CD4-positive, alpha-beta memory T cell (primary cell): ENCODE measurements at regions of chr11 and their contacts with region 1.

Region 1: DNA sequence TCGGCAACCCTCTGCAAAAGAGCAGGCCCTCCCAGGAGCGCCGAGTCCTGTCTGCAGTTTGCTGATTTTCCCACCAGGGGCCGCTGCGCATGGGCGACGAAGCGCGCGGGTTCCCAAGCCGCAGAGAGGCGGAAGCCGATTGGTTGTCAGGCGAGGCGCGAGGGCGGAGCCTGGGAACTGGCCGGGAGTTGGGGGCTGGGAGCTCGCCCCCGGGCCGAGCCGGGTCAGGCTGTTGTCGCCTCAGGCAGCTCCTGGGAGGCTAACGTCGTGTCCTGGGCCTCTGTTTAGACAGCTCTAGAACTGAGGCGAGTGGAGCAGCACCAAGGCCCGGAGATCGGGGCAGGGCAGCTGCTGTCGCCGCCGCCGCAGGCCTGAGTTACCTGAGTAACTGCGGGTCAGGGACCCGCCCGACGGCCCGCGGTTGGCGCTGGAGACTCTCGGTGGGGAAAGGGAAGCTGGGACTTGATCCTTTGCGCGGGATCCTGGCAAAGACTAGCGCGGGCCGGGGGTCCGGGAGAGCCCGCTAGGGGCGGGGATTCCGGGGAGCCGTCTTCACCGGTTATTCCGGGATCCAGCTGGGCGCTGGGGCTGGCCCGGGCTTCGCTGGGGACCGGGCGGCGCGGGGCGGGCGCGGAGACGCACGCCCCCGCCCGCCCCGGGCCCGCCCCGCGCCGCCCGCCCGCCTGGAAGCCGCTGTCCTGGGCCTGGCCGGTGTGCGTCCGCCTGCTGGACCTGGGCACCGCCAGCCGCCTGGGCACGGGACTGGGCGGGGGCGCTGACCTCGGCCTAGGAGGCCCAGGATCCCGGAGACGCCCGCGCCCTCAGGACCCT is at the start of gene STIM1:
- DNase-seq: peak; percentile 96 to 98 (median 97)
- H3K4me3 ChIP-seq: peak within 1 kb of the TSS; percentile 91 to 92
- H3K4me3 Mint-ChIP-seq: peak within 1 kb of the TSS; percentile 90 to 97 (median 94)
- H3K27ac ChIP-seq: peak within 1 kb of the TSS; percentile 94
- H3K27ac Mint-ChIP-seq: peak within 1 kb of the TSS; percentile 99 to 100 (median 99)
- H3K4me1 ChIP-seq: peaks cover 64% of the 10 kb centered on the region
- H3K4me1 Mint-ChIP-seq: peaks cover 49 to 71% (median 61%) of the 10 kb centered on the region in 4 donors
- H3K27me3 ChIP-seq: no peaks in the 10 kb centered on the region
- H3K27me3 Mint-ChIP-seq: no peaks in the 10 kb centered on the region
- total RNA-seq, gene STIM1: 87.1 to 87.4 TPM

Region 2: DNA sequence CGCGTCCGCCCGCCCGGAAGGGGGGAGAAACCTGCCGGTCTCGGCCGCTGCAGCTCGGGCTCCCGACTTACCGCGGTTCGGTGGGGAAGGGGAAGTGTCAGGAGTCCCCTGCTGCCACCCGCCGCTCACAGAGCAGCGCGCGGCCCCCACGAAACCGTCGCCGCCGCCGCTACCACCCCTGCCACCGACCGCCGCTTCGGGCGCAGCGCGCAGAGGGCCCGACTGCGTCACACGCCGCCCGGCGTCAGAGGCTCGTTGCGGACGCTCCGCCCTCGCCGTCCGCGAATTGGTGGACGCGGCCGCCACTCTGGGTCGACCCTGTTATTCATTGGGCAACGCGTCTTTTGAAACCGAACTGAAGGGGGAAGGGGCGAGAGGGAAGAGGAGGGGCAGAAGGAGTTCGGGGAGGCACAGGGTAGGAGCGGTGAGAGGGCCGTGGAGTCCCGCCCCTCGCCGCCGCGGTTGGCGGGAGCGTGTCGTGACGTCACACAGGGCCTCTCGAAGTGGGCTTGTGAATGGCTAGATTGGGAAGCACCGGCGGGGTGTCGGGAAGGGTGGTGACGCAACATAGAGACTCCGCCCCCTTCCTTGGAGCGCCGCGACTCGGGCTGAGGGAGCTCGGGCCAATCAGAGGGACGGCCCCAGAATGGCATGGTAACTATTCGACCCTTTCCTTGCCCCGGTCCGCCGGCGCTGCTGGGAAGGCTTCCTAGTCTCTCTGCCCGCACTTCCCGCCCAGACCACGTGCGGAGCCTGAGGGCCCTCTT is 57.7 kb before region 1 on chr11 and contains the start of gene NUP98:
- CTCF ChIA-PET with region 1: no interaction called
- POLR2A ChIA-PET with region 1: interaction called, 17 read pairs
- intact Hi-C with region 1: no loop called
- DNase-seq: peak; percentile 100
- H3K4me3 ChIP-seq: peak within 1 kb of the TSS; percentile 89 to 98
- H3K4me3 Mint-ChIP-seq: peak within 1 kb of the TSS; percentile 91 to 98 (median 96)
- H3K27ac ChIP-seq: peak within 1 kb of the TSS; percentile 99
- H3K27ac Mint-ChIP-seq: peak within 1 kb of the TSS; percentile 96 to 100 (median 99)
- H3K4me1 ChIP-seq: peaks cover 42% of the 10 kb centered on the region
- H3K4me1 Mint-ChIP-seq: peaks cover 26 to 61% (median 45%) of the 10 kb centered on the region in 4 donors
- H3K27me3 ChIP-seq: no peaks in the 10 kb centered on the region
- H3K27me3 Mint-ChIP-seq: no peaks in the 10 kb centered on the region
- total RNA-seq, gene NUP98: 109 to 112 TPM

Region 3: GRCh38 chr11:3867209-3868091 is 12.3 kb after region 1 on chr11:
- CTCF ChIA-PET with region 1: interaction called, 368 read pairs
- POLR2A ChIA-PET with region 1: interaction called, 58 read pairs
- intact Hi-C with region 1: loop called (anchors 1 kb)
- DNase-seq: no peak
- H3K4me3 ChIP-seq: no peak overlapping the region
- H3K4me3 Mint-ChIP-seq: peak overlapping the region in 7 of 8 donors; percentile 17 to 70 (median 24)
- H3K27ac ChIP-seq: no peak overlapping the region
- H3K27ac Mint-ChIP-seq: peak overlapping the region; percentile 60 to 93 (median 87)
- H3K4me1 ChIP-seq: peaks cover 88% of the 10 kb centered on the region
- H3K4me1 Mint-ChIP-seq: peaks cover 63 to 97% (median 83%) of the 10 kb centered on the region in 4 donors
- H3K27me3 ChIP-seq: no peaks in the 10 kb centered on the region
- H3K27me3 Mint-ChIP-seq: no peaks in the 10 kb centered on the region

Region 4: GRCh38 chr11:3905080-3905953 is 50.1 kb after region 1 on chr11:
- CTCF ChIA-PET with region 1: interaction called, 30 read pairs
- POLR2A ChIA-PET with region 1: interaction called, 24 read pairs
- intact Hi-C with region 1: loop called (anchors 2 kb)
- DNase-seq: peak; percentile 62 to 89 (median 77)
- H3K4me3 ChIP-seq: no peak overlapping the region
- H3K4me3 Mint-ChIP-seq: peak overlapping the region in 7 of 8 donors; percentile 8 to 67 (median 40)
- H3K27ac ChIP-seq: peak overlapping the region; percentile 45
- H3K27ac Mint-ChIP-seq: peak overlapping the region; percentile 75 to 95 (median 93)
- H3K4me1 ChIP-seq: peaks cover 84% of the 10 kb centered on the region
- H3K4me1 Mint-ChIP-seq: peaks cover 66 to 90% (median 81%) of the 10 kb centered on the region in 4 donors
- H3K27me3 ChIP-seq: no peaks in the 10 kb centered on the region
- H3K27me3 Mint-ChIP-seq: no peaks in the 10 kb centered on the region

Region 5: DNA sequence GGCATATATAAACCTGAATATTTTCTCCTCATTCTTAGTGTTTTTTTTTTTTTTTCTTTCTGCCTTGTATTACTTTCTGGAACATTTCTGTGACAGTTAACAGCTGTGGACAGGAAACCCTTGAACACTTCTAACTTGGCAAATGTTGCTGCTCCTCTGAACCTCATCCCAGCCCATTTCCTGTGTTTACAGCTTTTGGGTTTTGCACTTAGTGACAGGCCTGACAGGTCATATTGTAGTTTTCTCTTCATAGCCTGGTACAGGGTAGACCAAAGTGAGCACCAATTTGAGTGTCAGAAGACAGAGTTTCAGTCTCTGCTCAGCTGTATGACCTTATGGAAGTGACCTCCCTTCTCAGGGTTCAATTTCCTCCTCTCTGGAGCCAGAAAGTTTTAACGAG is 91.9 kb after region 1 on chr11:
- CTCF ChIA-PET with region 1: interaction called, 48 read pairs
- POLR2A ChIA-PET with region 1: interaction called, 229 read pairs
- intact Hi-C with region 1: loop called (anchors 1 kb)
- DNase-seq: peak; percentile 72 to 81 (median 77)
- H3K4me3 ChIP-seq: peak overlapping the region; percentile 19 to 45
- H3K4me3 Mint-ChIP-seq: peak overlapping the region; percentile 72 to 86 (median 80)
- H3K27ac ChIP-seq: peak overlapping the region; percentile 68
- H3K27ac Mint-ChIP-seq: peak overlapping the region; percentile 89 to 98 (median 94)
- H3K4me1 ChIP-seq: peaks cover 99% of the 10 kb centered on the region
- H3K4me1 Mint-ChIP-seq: peaks cover 87 to 97% (median 92%) of the 10 kb centered on the region in 4 donors
- H3K27me3 ChIP-seq: no peaks in the 10 kb centered on the region
- H3K27me3 Mint-ChIP-seq: no peaks in the 10 kb centered on the region

Region 6: GRCh38 chr11:4006946-4007680 is 151.9 kb after region 1 on chr11:
- CTCF ChIA-PET with region 1: interaction called, 10 read pairs
- POLR2A ChIA-PET with region 1: no interaction called
- intact Hi-C with region 1: no loop called
- DNase-seq: peak in 4 of 5 donors; percentile 24 to 40 (median 38)
- H3K4me3 ChIP-seq: no peak overlapping the region
- H3K4me3 Mint-ChIP-seq: peak overlapping the region in 5 of 8 donors; percentile 13 to 68 (median 55)
- H3K27ac ChIP-seq: no peak overlapping the region
- H3K27ac Mint-ChIP-seq: peak overlapping the region in 6 of 7 donors; percentile 9 to 65 (median 46)
- H3K4me1 ChIP-seq: peaks cover 22% of the 10 kb centered on the region
- H3K4me1 Mint-ChIP-seq: peaks cover 28 to 38% (median 31%) of the 10 kb centered on the region in 4 donors
- H3K27me3 ChIP-seq: no peaks in the 10 kb centered on the region
- H3K27me3 Mint-ChIP-seq: no peaks in the 10 kb centered on the region

Region 7: GRCh38 chr11:4087551-4087950 is 232.4 kb after region 1 on chr11:
- CTCF ChIA-PET with region 1: interaction called, 27 read pairs
- POLR2A ChIA-PET with region 1: interaction called, 36 read pairs
- intact Hi-C with region 1: no loop called
- DNase-seq: no peak
- H3K4me3 ChIP-seq: no peak overlapping the region
- H3K4me3 Mint-ChIP-seq: peak overlapping the region in 2 of 8 donors; percentile 23 to 36
- H3K27ac ChIP-seq: no peak overlapping the region
- H3K27ac Mint-ChIP-seq: peak overlapping the region; percentile 62 to 99 (median 93)
- H3K4me1 ChIP-seq: peaks cover 57% of the 10 kb centered on the region
- H3K4me1 Mint-ChIP-seq: peaks cover 49 to 74% (median 57%) of the 10 kb centered on the region in 4 donors
- H3K27me3 ChIP-seq: no peaks in the 10 kb centered on the region
- H3K27me3 Mint-ChIP-seq: no peaks in the 10 kb centered on the region